Heart left ventricle (tissue), 16 donors: ENCODE measurements at regions of chr5 and their contacts with region 1.

Region 1: DNA sequence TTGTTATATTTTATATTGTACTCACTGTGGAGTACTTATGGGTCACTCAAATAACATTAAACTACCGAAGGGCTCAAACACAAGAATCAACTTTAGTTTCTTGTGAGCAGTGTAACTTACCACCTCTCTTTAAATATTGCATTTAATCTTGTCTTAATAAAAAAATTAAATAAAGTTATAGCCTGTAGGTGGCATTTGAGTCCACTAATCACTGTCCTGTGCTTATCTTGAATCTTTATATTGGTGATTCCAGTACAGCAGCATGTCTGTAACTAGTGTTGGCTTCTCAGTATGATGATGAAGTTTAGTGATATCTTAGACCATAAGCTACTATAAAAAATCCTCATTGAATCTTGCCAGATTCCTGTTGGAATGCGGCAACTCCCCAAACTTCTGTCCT is 313.8 kb downstream of the FAM170A start:
- DNase-seq: no peak
- ATAC-seq: peak in 2 of 4 donors; percentile 34 to 68
- H3K4me3 ChIP-seq: no peak overlapping the region
- H3K27ac ChIP-seq: no peak overlapping the region
- H3K4me1 ChIP-seq: no peaks in the 10 kb centered on the region
- H3K27me3 ChIP-seq: no peaks in the 10 kb centered on the region
- CTCF ChIP-seq: peak in 10 of 12 donors; percentile 20 to 55 (median 36)
- POLR2A ChIP-seq: no peak

Region 2: DNA sequence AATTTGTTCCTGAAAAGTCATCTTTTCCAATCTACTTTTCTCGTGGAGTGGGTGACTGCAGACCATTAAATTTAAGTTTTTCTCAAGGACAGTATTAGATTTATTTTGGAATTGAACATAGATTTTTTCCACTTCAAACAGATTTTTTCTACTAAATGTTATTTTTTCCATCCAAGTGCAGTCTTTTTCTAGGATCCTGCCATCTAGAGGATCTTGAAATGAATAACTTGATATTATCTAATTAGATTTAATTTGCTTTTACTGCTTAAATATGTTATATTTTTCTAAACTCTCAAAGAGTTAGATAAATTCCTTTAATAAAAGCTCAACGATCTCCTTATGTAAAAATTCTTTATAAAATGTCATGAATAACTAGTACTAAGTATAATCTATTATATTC is 384.0 kb after region 1 on chr5:
- intact Hi-C with region 1: loop called in 1 of 10 experiments (anchors 10 kb)
- DNase-seq: no peak
- ATAC-seq: no peak
- H3K4me3 ChIP-seq: no peak overlapping the region
- H3K27ac ChIP-seq: no peak overlapping the region
- H3K4me1 ChIP-seq: no peaks in the 10 kb centered on the region
- H3K27me3 ChIP-seq: no peaks in the 10 kb centered on the region
- CTCF ChIP-seq: peak in 4 of 12 donors; percentile 26 to 35 (median 28)
- POLR2A ChIP-seq: no peak

Region 3: GRCh38 chr5:120794121-120794520 is 851.0 kb after region 1 on chr5:
- intact Hi-C with region 1: loop called in 1 of 10 experiments (anchors 10 kb)
- DNase-seq: no peak
- ATAC-seq: no peak
- H3K4me3 ChIP-seq: no peak overlapping the region
- H3K27ac ChIP-seq: no peak overlapping the region
- H3K4me1 ChIP-seq: no peaks in the 10 kb centered on the region
- H3K27me3 ChIP-seq: no peaks in the 10 kb centered on the region
- CTCF ChIP-seq: no peak
- POLR2A ChIP-seq: no peak